ENCODE measurements at regions of chrX and their contacts with region 1.

Region 1: GRCh38 chrX:4844387-4844786 is 1130.9 kb upstream of the PRKX start:
- DNase-seq: peak; percentile 90
- ATAC-seq: peak; percentile 57
- H3K4me3 ChIP-seq: no peak overlapping the region
- H3K27ac ChIP-seq: peak overlapping the region; percentile 47
- H3K4me1 ChIP-seq: peaks cover 18% of the 10 kb centered on the region
- H3K27me3 ChIP-seq: no peaks in the 10 kb centered on the region
- CTCF ChIP-seq: no peak

Region 2: GRCh38 chrX:4670615-4671014 is 173.8 kb before region 1 on chrX:
- CTCF ChIA-PET with region 1: no interaction called
- POLR2A ChIA-PET with region 1: no interaction called
- intact Hi-C with region 1: loop called (anchors 10 kb)
- DNase-seq: peak; percentile 54
- ATAC-seq: peak; percentile 61
- H3K4me3 ChIP-seq: no peak overlapping the region
- H3K27ac ChIP-seq: no peak overlapping the region
- H3K4me1 ChIP-seq: peaks cover 51% of the 10 kb centered on the region
- H3K27me3 ChIP-seq: no peaks in the 10 kb centered on the region
- CTCF ChIP-seq: peak; percentile 40

Region 3: GRCh38 chrX:4994855-4995254 is 150.5 kb after region 1 on chrX:
- CTCF ChIA-PET with region 1: no interaction called
- POLR2A ChIA-PET with region 1: no interaction called
- intact Hi-C with region 1: no loop called
- DNase-seq: peak; percentile 4
- ATAC-seq: no peak
- H3K4me3 ChIP-seq: no peak overlapping the region
- H3K27ac ChIP-seq: no peak overlapping the region
- H3K4me1 ChIP-seq: no peaks in the 10 kb centered on the region
- H3K27me3 ChIP-seq: no peaks in the 10 kb centered on the region
- CTCF ChIP-seq: no peak

Measured in PC-3 (cell line).